Cardiac septum (tissue), 1 donor: ENCODE measurements at regions of chr7 and their contacts with region 1.

Region 1: GRCh38 chr7:113705439-113705838 is 213.4 kb downstream of the PPP1R3A start:
- DNase-seq: no peak

Region 2: DNA sequence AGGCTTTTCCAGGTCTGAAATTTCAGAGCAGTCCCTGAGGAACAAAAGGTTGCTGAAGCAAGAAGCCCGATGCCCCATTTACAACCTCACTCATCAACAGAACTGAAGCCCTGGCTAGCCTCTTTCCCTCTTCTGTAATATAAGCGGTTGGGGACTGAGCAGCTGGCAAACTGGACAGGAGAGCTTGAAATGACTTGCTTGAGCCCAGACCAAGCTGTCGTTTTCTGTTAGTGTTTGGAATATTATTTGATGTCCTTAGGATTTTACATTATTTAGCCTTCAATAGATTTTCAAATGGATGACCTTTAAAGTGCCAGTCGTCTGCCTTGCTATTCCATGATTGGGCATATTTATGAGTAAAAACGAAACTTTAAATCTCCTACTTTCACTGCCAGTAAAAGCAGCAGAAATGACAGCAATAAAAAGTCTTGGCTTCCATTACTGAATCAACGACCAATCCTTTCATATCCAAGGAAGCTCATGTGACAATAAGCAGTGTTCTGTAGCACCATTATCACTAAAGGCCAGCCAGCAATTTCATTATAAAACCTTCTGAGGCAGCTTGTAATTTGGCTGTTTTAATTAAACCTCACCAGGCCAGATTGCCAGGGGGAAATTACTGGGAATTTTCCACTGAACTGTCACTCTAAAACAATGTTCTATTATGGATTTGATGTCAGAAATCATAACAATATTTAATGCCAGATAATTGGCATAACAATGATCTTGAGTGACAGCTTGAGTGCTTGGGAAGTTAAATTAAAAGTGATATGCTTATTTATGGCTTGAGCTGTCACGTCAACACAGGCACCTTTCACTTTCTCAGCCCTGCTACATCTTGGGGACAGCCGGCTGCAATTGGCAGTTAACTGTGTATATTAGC is 1138.8 kb before region 1 on chr7:
- intact Hi-C with region 1: loop called (anchors 10 kb)
- DNase-seq: no peak

Region 3: GRCh38 chr7:113314594-113314993 is 390.8 kb before region 1 on chr7:
- intact Hi-C with region 1: no loop called
- DNase-seq: no peak

Region 4: DNA sequence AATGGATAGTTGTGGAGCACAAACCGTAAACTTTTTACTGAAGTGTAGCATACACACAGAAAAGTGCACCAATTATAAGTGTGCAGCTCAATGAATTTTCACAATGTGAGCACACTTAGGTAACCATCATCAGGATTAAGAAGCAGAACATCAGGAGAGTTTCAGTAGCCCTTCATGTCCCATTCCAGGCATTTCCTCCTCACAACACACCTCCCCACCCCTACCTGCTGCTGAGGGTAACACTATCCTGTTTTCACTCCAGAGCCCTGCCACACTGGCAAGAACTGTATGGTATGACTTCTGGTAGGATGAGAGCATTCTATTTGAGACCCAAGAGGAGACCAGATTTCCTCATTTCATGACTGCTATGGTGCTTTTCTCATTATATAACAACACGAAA is 46.9 kb after region 1 on chr7:
- intact Hi-C with region 1: no loop called
- DNase-seq: no peak